PC-9 (cell line): ENCODE measurements at regions of chr7 and their contacts with region 1.

Region 1: DNA sequence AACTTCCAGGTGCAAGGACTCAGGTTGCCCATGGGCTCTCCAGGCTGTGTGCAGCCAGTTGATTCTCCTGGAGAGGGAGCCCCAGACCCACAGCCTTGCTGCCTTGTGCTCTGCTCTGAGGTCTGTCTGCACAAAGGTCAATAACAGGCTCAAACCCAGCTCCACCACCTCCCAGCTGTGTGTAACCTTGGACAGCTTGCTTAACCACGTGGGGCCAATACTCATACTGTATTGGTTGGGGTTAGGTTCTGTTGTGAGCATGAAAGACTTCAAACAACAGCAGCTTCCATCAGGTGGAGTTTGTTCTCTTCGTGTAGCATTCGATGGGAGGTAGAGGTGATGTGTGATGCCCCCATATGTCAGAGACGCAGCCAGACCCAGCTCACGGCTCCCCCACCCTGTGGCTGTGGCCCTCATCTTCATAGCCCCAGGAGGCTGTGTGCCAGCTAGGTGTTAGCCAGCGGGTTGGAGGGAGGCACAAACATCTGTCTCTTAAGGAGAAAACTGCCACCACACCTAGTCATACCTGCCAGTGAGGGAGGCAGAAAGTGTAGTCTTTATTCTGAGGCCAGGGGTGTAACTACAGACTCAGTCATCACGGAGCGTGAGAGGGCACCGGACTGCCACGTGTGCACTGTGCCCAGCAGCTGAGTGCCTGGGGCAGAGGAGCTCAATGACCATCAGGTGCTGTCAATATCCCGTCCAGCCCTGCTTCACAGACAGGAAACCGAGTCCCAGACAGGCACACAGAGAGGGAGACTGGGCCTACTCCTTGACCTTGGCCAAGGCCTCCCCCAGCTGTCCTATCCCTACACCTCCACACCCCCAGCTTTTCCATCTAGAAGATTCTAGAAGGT is 8.1 kb upstream of the POLD2 start:
- DNase-seq: peak; percentile 51 to 73
- H3K4me3 ChIP-seq: no peak overlapping the region
- H3K27ac ChIP-seq: no peak overlapping the region
- H3K4me1 ChIP-seq: peaks cover 5% of the 10 kb centered on the region
- H3K27me3 ChIP-seq: no peaks in the 10 kb centered on the region
- CTCF ChIP-seq: peak; percentile 77

Region 2: GRCh38 chr7:44184206-44184872 is 52.9 kb after region 1 on chr7:
- CTCF ChIA-PET with region 1: no interaction called
- POLR2A ChIA-PET with region 1: no interaction called
- intact Hi-C with region 1: loop called (anchors 5 kb)
- DNase-seq: peak; percentile 90 to 99
- H3K4me3 ChIP-seq: no peak overlapping the region
- H3K27ac ChIP-seq: peak overlapping the region; percentile 35
- H3K4me1 ChIP-seq: peaks cover 51% of the 10 kb centered on the region
- H3K27me3 ChIP-seq: no peaks in the 10 kb centered on the region
- CTCF ChIP-seq: no peak